Dorsolateral prefrontal cortex (tissue), 120 donors: ENCODE measurements at regions of chr11 and their contacts with region 1.

Region 1: GRCh38 chr11:84089072-84090057 is 803.2 kb upstream of the CCDC90B start:
- DNase-seq: peak in 4 of 10 donors; percentile 28 to 74 (median 50)
- H3K4me3 ChIP-seq: peak overlapping the region in 4 of 59 donors; percentile 9 to 19 (median 16)
- H3K27ac ChIP-seq: peak overlapping the region; percentile 5 to 96 (median 85)
- H3K27me3 ChIP-seq: no peaks in the 10 kb centered on the region
- CTCF ChIP-seq: peak in 2 of 56 donors; percentile 23 to 28

Region 2: GRCh38 chr11:83971063-83971462 is 118.3 kb before region 1 on chr11:
- intact Hi-C with region 1: loop called in 1 of 2 experiments (anchors 10 kb)
- DNase-seq: peak in 6 of 10 donors; percentile 6 to 43 (median 34)
- H3K4me3 ChIP-seq: peak overlapping the region in 7 of 59 donors; percentile 0 to 29 (median 7)
- H3K27ac ChIP-seq: peak overlapping the region in 57 of 59 donors; percentile 32 to 91 (median 83)
- H3K27me3 ChIP-seq: no peaks in the 10 kb centered on the region
- CTCF ChIP-seq: peak in 11 of 56 donors; percentile 9 to 35 (median 15)

Region 3: GRCh38 chr11:84316866-84317555 is 227.6 kb after region 1 on chr11:
- intact Hi-C with region 1: loop called (anchors 10 kb)
- DNase-seq: peak; percentile 8 to 90 (median 76)
- H3K4me3 ChIP-seq: peak overlapping the region; percentile 41 to 85 (median 69)
- H3K27ac ChIP-seq: peak overlapping the region; percentile 26 to 95 (median 89)
- H3K27me3 ChIP-seq: no peaks in the 10 kb centered on the region
- CTCF ChIP-seq: peak in 8 of 56 donors; percentile 13 to 38 (median 18)